Posterior vena cava (tissue), 2 donors: ENCODE measurements at regions of chr1 and their contacts with region 1.

Region 1: DNA sequence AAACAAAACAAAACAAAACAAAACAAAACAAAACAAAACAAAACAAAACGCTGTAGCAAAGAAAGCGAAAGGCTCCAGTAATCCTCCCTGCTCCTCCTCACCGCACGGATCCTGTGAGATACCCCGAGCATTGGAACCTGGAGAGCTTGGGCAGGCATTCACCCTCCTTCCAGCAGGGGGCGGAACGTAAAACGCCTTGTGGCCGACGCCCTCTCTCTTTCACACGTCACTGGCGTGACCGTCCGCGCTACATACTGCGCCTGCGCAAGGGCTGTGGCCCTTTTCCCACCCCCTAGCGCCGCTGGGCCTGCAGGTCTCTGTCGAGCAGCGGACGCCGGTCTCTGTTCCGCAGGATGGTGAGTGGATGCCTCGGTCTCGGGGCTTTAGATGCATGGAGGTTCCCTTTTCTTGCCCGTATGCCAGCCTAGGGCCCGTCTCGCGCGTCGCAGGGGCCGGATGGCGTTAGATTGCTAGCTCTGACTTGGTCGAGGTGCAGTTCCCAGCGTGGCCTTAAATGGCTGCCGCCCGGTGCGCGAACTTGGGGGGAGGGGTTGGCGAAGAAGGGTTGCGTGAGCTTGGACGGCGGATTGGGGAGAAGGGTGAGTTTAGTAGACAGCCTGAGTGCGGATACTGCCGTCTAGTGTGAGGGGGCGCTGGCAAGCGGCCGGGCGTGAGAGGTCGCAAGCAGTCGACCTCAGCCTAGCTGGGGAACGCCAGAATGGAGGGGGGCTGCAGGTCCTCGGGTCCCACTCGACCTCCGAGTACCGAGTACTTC is at the start of gene RPL5:
- DNase-seq: peak; percentile 99
- total RNA-seq, gene RPL5: 735 to 805 TPM

Region 2: DNA sequence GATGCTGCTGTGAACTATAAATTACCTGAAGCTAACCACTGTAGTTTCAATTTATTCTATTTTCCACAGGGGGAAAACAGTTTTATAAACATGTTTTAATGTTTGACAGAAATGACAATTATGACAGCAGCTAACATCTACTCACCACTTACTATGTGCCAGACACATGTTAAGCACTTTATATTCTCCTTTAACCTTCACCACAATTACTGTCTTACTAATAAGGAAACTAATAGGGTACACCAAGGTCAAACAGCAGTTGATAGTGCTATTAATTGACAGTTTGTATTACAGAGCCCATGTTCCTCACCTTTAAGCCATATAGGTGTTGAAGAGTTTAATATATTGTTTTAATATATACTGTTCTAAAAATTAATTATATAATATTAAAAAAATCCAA is 193.5 kb before region 1 on chr1:
- intact Hi-C with region 1: loop called in 1 of 2 experiments (anchors 10 kb)
- DNase-seq: no peak

Region 3: GRCh38 chr1:92804721-92805169 is 27.2 kb before region 1 on chr1:
- intact Hi-C with region 1: no loop called
- DNase-seq: peak; percentile 88